SK-N-SH (cell line): ENCODE measurements at regions of chr7 and their contacts with region 1.

Region 1: GRCh38 chr7:142866361-142867058 is 11.6 kb downstream of the EPHB6 start:
- DNase-seq: peak; percentile 88
- H3K4me3 ChIP-seq: no peak overlapping the region
- H3K27ac ChIP-seq: no peak overlapping the region
- H3K4me1 ChIP-seq: no peaks in the 10 kb centered on the region
- H3K27me3 ChIP-seq: peaks cover 11% of the 10 kb centered on the region
- CTCF ChIP-seq: peak; percentile 77
- EP300 ChIP-seq: no peak
- RAD21 ChIP-seq: peak; percentile 69

Region 2: GRCh38 chr7:142612237-142612881 is 254.2 kb before region 1 on chr7:
- CTCF ChIA-PET with region 1: interaction called, 12 read pairs
- POLR2A ChIA-PET with region 1: no interaction called
- DNase-seq: peak; percentile 63
- H3K4me3 ChIP-seq: no peak overlapping the region
- H3K27ac ChIP-seq: peak overlapping the region in 1 of 2 experiments; percentile 98; a peak in 3 of 4 replicates
- H3K4me1 ChIP-seq: peaks cover 0 to 17% of the 10 kb centered on the region in 2 experiments; a peak in 2 of 4 replicates
- H3K27me3 ChIP-seq: no peaks in the 10 kb centered on the region; the same call in 1 of the 2 replicates
- CTCF ChIP-seq: no peak
- EP300 ChIP-seq: peak; percentile 23 to 68; a peak in 2 of 4 replicates
- RAD21 ChIP-seq: no peak

Region 3: DNA sequence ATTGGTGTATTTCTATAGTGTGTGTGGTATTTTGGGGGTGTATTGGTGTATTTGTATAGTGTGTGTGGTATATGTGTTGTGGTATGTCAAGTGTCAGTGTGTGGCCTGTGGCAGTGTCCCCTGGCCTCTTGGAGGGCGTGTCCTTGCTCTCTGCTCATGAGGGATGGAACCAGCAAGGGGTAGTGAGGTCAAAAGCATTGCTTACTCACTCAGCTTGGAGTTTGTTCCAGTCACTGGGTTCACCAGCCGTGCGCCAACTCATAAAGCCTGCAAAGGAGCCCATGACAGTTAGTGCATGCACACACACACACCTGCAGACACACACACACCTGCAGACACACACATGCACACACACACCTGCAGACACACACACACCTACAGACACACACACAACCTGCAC is 23.3 kb after region 1 on chr7:
- CTCF ChIA-PET with region 1: no interaction called
- POLR2A ChIA-PET with region 1: no interaction called
- DNase-seq: no peak
- H3K4me3 ChIP-seq: no peak overlapping the region
- H3K27ac ChIP-seq: no peak overlapping the region
- H3K4me1 ChIP-seq: no peaks in the 10 kb centered on the region
- H3K27me3 ChIP-seq: peaks cover 15% of the 10 kb centered on the region
- CTCF ChIP-seq: no peak
- EP300 ChIP-seq: no peak
- RAD21 ChIP-seq: no peak

Region 4: GRCh38 chr7:143172354-143172753 is 305.8 kb after region 1 on chr7:
- CTCF ChIA-PET with region 1: no interaction called
- POLR2A ChIA-PET with region 1: no interaction called
- DNase-seq: no peak
- H3K4me3 ChIP-seq: peak overlapping the region; percentile 33 to 52; a peak in 3 of 4 replicates
- H3K27ac ChIP-seq: no peak overlapping the region
- H3K4me1 ChIP-seq: no peaks in the 10 kb centered on the region
- H3K27me3 ChIP-seq: no peaks in the 10 kb centered on the region; the same call in 1 of the 2 replicates
- CTCF ChIP-seq: no peak
- EP300 ChIP-seq: no peak
- RAD21 ChIP-seq: no peak